CD4-positive, alpha-beta memory T cell (primary cell): ENCODE measurements at regions of chr7 and their contacts with region 1.

Region 1: GRCh38 chr7:36986429-36987362 is 262.4 kb upstream of the AOAH start:
- DNase-seq: peak; percentile 30 to 50 (median 41)
- H3K4me3 ChIP-seq: no peak overlapping the region
- H3K4me3 Mint-ChIP-seq: no peak overlapping the region
- H3K27ac ChIP-seq: no peak overlapping the region
- H3K27ac Mint-ChIP-seq: peak overlapping the region in 3 of 7 donors; percentile 36 to 88 (median 82)
- H3K4me1 ChIP-seq: no peaks in the 10 kb centered on the region
- H3K4me1 Mint-ChIP-seq: peaks cover 25 to 43% (median 31%) of the 10 kb centered on the region in 4 donors
- H3K27me3 ChIP-seq: no peaks in the 10 kb centered on the region
- H3K27me3 Mint-ChIP-seq: no peaks in the 10 kb centered on the region

Region 2: DNA sequence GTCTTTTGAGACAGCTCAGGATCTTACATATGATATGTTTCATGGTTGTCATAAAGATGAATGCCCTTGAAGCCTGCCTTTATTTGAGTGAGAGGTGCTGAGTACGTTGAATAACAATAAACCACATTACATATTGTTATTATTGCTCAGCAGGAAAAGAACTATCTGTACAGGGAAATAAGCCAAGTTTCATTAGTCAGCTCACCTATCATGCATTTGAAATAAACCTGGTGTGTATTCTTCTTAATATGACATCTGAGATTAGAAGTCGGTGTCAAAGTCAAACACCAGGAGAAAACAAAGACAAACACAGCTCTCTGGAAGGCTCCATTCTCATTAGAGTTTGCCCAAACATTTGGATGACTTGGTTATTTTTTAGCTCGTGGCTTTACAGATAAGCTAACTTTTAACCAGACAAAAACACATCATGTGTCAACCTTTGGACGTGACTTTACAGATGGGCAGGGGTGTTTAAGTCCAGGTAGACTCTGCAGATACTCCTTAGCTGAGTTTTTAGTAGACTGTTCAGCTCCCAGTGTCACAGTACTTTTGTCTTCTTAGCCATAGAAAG is 191.2 kb before region 1 on chr7:
- CTCF ChIA-PET with region 1: no interaction called
- POLR2A ChIA-PET with region 1: no interaction called
- intact Hi-C with region 1: no loop called
- DNase-seq: peak in 1 of 5 donors; percentile 12
- H3K4me3 ChIP-seq: no peak overlapping the region
- H3K4me3 Mint-ChIP-seq: peak overlapping the region in 1 of 8 donors; percentile 14
- H3K27ac ChIP-seq: no peak overlapping the region
- H3K27ac Mint-ChIP-seq: peak overlapping the region in 5 of 7 donors; percentile 32 to 87 (median 58)
- H3K4me1 ChIP-seq: peaks cover 20% of the 10 kb centered on the region
- H3K4me1 Mint-ChIP-seq: peaks cover 16 to 32% (median 26%) of the 10 kb centered on the region in 4 donors
- H3K27me3 ChIP-seq: no peaks in the 10 kb centered on the region
- H3K27me3 Mint-ChIP-seq: no peaks in the 10 kb centered on the region

Region 3: GRCh38 chr7:36969376-36969775 is 17.3 kb before region 1 on chr7:
- CTCF ChIA-PET with region 1: interaction called, 33 read pairs
- POLR2A ChIA-PET with region 1: no interaction called
- intact Hi-C with region 1: no loop called
- DNase-seq: peak in 4 of 5 donors; percentile 4 to 47 (median 36)
- H3K4me3 ChIP-seq: no peak overlapping the region
- H3K4me3 Mint-ChIP-seq: peak overlapping the region in 7 of 8 donors; percentile 8 to 51 (median 46)
- H3K27ac ChIP-seq: no peak overlapping the region
- H3K27ac Mint-ChIP-seq: peak overlapping the region in 4 of 7 donors; percentile 65 to 86 (median 80)
- H3K4me1 ChIP-seq: peaks cover 41% of the 10 kb centered on the region
- H3K4me1 Mint-ChIP-seq: peaks cover 39 to 63% (median 50%) of the 10 kb centered on the region in 4 donors
- H3K27me3 ChIP-seq: no peaks in the 10 kb centered on the region
- H3K27me3 Mint-ChIP-seq: no peaks in the 10 kb centered on the region

Region 4: GRCh38 chr7:36999626-37000485 is 13.2 kb after region 1 on chr7:
- CTCF ChIA-PET with region 1: interaction called, 37 read pairs
- POLR2A ChIA-PET with region 1: no interaction called
- intact Hi-C with region 1: no loop called
- DNase-seq: no peak
- H3K4me3 ChIP-seq: no peak overlapping the region
- H3K4me3 Mint-ChIP-seq: no peak overlapping the region
- H3K27ac ChIP-seq: no peak overlapping the region
- H3K27ac Mint-ChIP-seq: peak overlapping the region in 2 of 7 donors; percentile 52 to 60
- H3K4me1 ChIP-seq: no peaks in the 10 kb centered on the region
- H3K4me1 Mint-ChIP-seq: peaks cover 3 to 26% (median 9%) of the 10 kb centered on the region in 4 donors
- H3K27me3 ChIP-seq: no peaks in the 10 kb centered on the region
- H3K27me3 Mint-ChIP-seq: no peaks in the 10 kb centered on the region